ENCODE measurements at regions of chr2 and their contacts with region 1.

Region 1: GRCh38 chr2:64767670-64768468 is 114.2 kb upstream of the SERTAD2 start:
- DNase-seq: peak; percentile 76
- ATAC-seq: peak; percentile 81
- H3K4me3 Mint-ChIP-seq: peak overlapping the region; percentile 88
- H3K27ac Mint-ChIP-seq: peak overlapping the region; percentile 96
- H3K4me1 Mint-ChIP-seq: peaks cover 21% of the 10 kb centered on the region
- H3K27me3 Mint-ChIP-seq: no peaks in the 10 kb centered on the region
- CTCF ChIP-seq: no peak

Region 2: GRCh38 chr2:63926800-63927199 is 841.1 kb before region 1 on chr2:
- CTCF ChIA-PET with region 1: no interaction called
- POLR2A ChIA-PET with region 1: no interaction called
- intact Hi-C with region 1: no loop called
- DNase-seq: no peak
- ATAC-seq: no peak
- H3K4me3 Mint-ChIP-seq: no peak overlapping the region
- H3K27ac Mint-ChIP-seq: no peak overlapping the region
- H3K4me1 Mint-ChIP-seq: no peaks in the 10 kb centered on the region
- H3K27me3 Mint-ChIP-seq: no peaks in the 10 kb centered on the region
- CTCF ChIP-seq: no peak

Region 3: DNA sequence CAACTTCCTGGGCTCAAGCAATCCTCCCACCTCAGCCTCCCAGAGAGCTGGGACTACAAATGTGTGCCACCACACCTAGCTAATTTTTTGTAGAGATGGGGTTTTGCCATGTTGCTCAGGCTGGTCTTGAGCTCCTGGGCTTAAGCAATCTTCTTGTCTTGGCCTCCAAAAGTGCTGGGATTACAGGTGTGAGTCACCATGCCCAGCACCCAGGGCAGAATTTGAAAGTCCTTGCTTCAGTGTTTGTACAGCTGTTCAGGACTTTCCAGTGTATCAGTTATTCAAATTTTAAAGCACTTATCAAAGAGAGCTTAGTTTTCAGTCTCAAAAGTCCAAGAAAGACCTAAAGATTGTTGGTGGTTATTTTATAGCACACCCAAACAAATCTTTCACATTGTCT is 705.0 kb before region 1 on chr2:
- CTCF ChIA-PET with region 1: no interaction called
- POLR2A ChIA-PET with region 1: interaction called, 11 read pairs
- intact Hi-C with region 1: no loop called
- DNase-seq: no peak
- ATAC-seq: no peak
- H3K4me3 Mint-ChIP-seq: no peak overlapping the region
- H3K27ac Mint-ChIP-seq: peak overlapping the region; percentile 47
- H3K4me1 Mint-ChIP-seq: peaks cover 22% of the 10 kb centered on the region
- H3K27me3 Mint-ChIP-seq: no peaks in the 10 kb centered on the region
- CTCF ChIP-seq: no peak

Region 4: DNA sequence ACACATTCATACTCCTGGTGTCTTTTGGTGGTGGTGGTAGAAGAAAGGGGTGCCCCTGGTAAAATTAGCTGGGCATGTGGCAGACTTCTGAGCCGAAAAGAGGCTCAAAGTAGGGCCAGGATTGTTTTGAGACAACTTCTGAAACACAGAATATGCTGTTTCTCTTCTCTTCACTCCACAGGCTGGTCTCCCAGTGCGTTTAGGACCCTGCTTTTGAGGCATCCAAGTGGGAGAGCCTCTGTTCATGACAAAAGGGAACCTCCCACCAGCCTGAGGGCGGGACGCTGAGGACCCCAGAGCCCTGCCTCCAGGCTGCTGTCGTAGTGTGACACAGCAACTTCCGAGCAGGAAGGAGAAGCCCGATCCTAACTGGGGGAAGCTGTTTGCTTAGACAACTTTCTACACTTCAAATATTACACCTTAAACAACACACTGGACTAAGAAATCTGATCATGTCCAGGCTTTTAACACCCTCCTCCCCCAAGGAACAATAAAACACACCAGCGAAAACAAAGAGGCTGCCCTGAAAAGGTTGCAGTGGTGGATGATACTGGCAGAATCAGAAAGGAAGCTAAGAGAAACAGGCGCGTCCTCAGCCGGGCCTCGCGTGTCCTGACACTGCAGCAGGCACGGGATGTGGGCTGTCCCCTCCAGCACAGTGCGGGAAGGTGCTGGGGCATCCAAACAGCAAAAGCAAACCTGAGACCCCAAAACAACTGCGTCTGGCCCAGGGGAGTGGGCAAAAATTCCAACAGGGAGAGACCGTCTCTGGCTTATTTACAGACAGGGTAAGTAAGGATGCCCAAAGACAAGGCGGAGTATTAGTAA is 123.5 kb before region 1 on chr2:
- CTCF ChIA-PET with region 1: interaction called, 11 read pairs
- POLR2A ChIA-PET with region 1: interaction called, 21 read pairs
- intact Hi-C with region 1: loop called (anchors 1 kb)
- DNase-seq: peak; percentile 48
- ATAC-seq: peak; percentile 45
- H3K4me3 Mint-ChIP-seq: peak overlapping the region; percentile 86
- H3K27ac Mint-ChIP-seq: peak overlapping the region; percentile 93
- H3K4me1 Mint-ChIP-seq: peaks cover 96% of the 10 kb centered on the region
- H3K27me3 Mint-ChIP-seq: no peaks in the 10 kb centered on the region
- CTCF ChIP-seq: no peak

Region 5: GRCh38 chr2:64698668-64699444 is 69.0 kb before region 1 on chr2:
- CTCF ChIA-PET with region 1: no interaction called
- POLR2A ChIA-PET with region 1: interaction called, 4 read pairs
- intact Hi-C with region 1: loop called (anchors 1 kb)
- DNase-seq: no peak
- ATAC-seq: peak; percentile 86
- H3K4me3 Mint-ChIP-seq: peak overlapping the region; percentile 52
- H3K27ac Mint-ChIP-seq: peak overlapping the region; percentile 89
- H3K4me1 Mint-ChIP-seq: peaks cover 51% of the 10 kb centered on the region
- H3K27me3 Mint-ChIP-seq: no peaks in the 10 kb centered on the region
- CTCF ChIP-seq: no peak

Region 6: GRCh38 chr2:64737547-64737946 is 30.3 kb before region 1 on chr2:
- CTCF ChIA-PET with region 1: no interaction called
- POLR2A ChIA-PET with region 1: no interaction called
- intact Hi-C with region 1: no loop called
- DNase-seq: no peak
- ATAC-seq: no peak
- H3K4me3 Mint-ChIP-seq: no peak overlapping the region
- H3K27ac Mint-ChIP-seq: no peak overlapping the region
- H3K4me1 Mint-ChIP-seq: peaks cover 8% of the 10 kb centered on the region
- H3K27me3 Mint-ChIP-seq: no peaks in the 10 kb centered on the region
- CTCF ChIP-seq: no peak

Region 7: DNA sequence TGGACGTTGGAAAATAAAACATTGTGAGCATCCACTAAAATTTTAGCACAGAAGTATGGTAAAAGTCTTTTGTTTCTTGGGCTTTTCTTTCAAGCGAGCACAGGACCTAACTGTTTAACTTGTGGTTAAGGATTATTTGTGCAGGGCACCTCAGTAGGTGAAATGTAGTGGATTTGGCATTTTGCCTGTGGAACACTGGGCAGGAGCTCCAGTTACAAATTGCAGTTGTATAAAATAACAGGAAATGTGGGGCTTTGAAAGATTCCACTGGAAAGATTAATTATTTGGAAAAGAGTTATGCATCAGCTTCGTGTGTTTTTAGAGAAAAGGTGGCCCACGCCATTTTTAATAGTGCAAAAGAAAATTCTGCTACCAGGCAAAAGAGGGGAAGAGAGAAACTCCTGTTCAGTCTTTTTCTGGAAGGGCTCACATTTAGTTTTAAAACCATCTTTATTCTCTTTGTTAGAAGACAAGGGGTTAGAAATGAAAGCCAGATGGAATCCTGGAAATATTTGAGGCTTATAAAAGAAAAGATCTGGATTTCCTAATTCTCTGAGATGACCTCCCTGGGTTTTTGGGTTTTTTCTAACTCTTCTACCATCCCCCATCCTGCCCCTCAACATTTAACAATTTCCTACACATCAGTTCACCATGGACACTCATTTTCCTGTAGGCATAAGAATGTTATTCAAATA is 30.2 kb after region 1 on chr2:
- CTCF ChIA-PET with region 1: interaction called, 3 read pairs
- POLR2A ChIA-PET with region 1: interaction called, 3 read pairs
- intact Hi-C with region 1: loop called (anchors 1 kb)
- DNase-seq: no peak
- ATAC-seq: no peak
- H3K4me3 Mint-ChIP-seq: no peak overlapping the region
- H3K27ac Mint-ChIP-seq: no peak overlapping the region
- H3K4me1 Mint-ChIP-seq: peaks cover 7% of the 10 kb centered on the region
- H3K27me3 Mint-ChIP-seq: no peaks in the 10 kb centered on the region
- CTCF ChIP-seq: no peak

Region 8: DNA sequence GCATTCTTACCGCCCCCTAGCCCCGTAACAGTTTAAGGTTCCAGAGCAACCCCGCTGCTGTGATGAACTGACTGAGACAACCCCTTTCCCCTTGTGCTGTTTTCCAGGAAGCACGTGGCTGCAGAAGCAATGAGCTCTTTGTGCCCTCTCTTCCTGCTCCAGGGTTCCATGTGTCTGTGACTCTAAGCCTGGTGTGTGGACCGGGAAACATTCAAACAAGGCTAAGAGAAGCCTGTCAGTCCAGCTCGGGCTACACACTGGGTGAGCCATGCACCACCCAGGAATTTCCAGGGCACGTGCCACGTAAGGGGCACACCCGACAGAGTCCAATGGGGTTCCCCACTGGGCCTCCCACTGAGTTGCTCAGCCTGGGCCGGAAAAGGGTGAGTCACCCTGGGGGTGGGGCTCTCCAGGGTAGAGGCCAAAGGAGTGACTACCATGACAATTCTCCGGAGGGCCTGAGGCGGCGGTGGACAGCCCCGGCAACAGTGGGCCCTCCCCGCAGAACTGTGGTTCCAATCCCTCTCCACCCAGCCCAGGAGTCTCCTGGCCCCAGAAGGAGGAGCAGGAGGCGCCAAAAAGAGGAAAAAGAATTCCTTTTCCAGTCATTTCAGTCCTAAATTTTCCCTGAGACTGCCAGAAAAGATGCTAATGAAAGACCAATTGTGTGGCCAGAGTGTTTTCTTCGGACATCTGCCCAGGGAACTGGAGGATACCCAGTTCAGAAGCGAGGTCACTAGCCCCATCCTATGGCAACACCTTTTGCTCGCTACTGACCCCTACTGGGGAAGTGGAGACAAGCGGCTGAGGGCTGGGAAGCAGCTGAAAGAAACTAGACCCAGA is 63.5 kb after region 1 on chr2:
- CTCF ChIA-PET with region 1: interaction called, 6 read pairs
- POLR2A ChIA-PET with region 1: interaction called, 28 read pairs
- intact Hi-C with region 1: loop called (anchors 1 kb)
- DNase-seq: peak; percentile 75
- ATAC-seq: peak; percentile 96
- H3K4me3 Mint-ChIP-seq: peak overlapping the region; percentile 63
- H3K27ac Mint-ChIP-seq: peak overlapping the region; percentile 82
- H3K4me1 Mint-ChIP-seq: peaks cover 21% of the 10 kb centered on the region
- H3K27me3 Mint-ChIP-seq: no peaks in the 10 kb centered on the region
- CTCF ChIP-seq: no peak

Region 9: GRCh38 chr2:65024149-65024829 is 256.4 kb after region 1 on chr2:
- CTCF ChIA-PET with region 1: no interaction called
- POLR2A ChIA-PET with region 1: no interaction called
- intact Hi-C with region 1: loop called (anchors 5 kb)
- DNase-seq: no peak
- ATAC-seq: no peak
- H3K4me3 Mint-ChIP-seq: peak overlapping the region; percentile 29
- H3K27ac Mint-ChIP-seq: peak overlapping the region; percentile 63
- H3K4me1 Mint-ChIP-seq: peaks cover 58% of the 10 kb centered on the region
- H3K27me3 Mint-ChIP-seq: no peaks in the 10 kb centered on the region
- CTCF ChIP-seq: no peak